ENCODE measurements at regions of chr14 and their contacts with region 1.

Region 1: GRCh38 chr14:85607651-85608081 is 77.7 kb downstream of the FLRT2 start:
- DNase-seq: peak; percentile 60
- ATAC-seq: no peak
- H3K4me3 ChIP-seq: no peak overlapping the region
- H3K27ac ChIP-seq: no peak overlapping the region
- H3K4me1 ChIP-seq: no peaks in the 10 kb centered on the region
- H3K27me3 ChIP-seq: no peaks in the 10 kb centered on the region
- CTCF ChIP-seq: no peak

Region 2: DNA sequence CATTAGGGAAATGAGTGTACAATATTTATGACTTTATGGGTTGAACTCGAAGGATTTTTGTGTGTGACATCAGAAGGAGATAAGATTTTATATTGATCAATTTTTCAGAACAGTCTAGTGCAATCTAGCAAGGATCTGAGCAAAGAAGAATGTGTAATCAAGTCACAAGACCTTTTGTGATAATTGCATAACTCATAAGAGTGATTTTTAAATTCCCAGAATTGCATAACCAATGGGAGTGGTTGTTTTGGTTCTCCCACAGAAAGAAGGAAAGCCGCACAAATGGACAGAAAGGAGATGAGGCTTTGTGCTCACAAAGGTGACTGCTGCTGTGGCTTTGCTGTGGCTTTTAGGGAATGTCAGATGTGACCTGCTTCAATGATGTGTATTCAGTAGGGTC is 519.4 kb before region 1 on chr14:
- CTCF ChIA-PET with region 1: interaction called, 10 read pairs
- POLR2A ChIA-PET with region 1: no interaction called
- in situ Hi-C with region 1: no loop called
- intact Hi-C with region 1: no loop called
- DNase-seq: no peak
- ATAC-seq: no peak
- H3K4me3 ChIP-seq: no peak overlapping the region
- H3K27ac ChIP-seq: no peak overlapping the region
- H3K4me1 ChIP-seq: no peaks in the 10 kb centered on the region
- H3K27me3 ChIP-seq: no peaks in the 10 kb centered on the region
- CTCF ChIP-seq: no peak

Measured in Panc1 (cell line).